ENCODE measurements at regions of chr14 and their contacts with region 1.

Region 1: GRCh38 chr14:71103662-71104484 is 196.6 kb downstream of the PCNX1 start:
- DNase-seq: peak; percentile 60

Region 2: DNA sequence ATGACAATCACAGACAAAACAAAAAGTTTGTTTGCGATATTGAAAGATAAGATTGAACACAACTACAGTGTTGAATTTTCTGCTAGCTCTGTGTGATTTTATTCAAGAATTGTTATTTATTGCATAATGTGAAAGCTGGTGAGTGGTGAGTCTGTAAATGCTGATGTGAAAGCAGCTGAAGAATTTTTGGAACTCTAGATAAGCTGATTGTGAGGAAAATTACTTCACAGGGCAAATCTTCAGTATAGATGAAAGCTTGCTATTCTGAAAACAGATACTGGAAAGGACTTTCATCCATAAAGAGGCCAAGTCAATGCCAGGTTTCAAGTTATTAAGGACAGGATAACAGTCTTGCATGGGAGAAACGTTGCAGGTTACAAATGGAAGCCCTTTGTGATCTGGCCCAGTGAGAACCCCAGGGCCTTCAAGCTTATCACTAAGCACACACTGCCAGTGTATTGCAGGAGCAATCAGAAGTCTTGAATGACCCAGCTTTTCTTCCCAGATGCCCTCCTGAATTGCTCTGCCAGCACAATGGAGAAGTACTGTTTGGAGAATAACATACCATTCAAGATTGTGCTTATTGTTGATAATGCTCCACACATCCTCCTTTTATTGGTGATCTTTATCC is 42.9 kb before region 1 on chr14:
- CTCF ChIA-PET with region 1: no interaction called
- POLR2A ChIA-PET with region 1: no interaction called
- DNase-seq: no peak

Region 3: GRCh38 chr14:71086567-71086966 is 17.3 kb before region 1 on chr14:
- CTCF ChIA-PET with region 1: interaction called, 10 read pairs
- POLR2A ChIA-PET with region 1: no interaction called
- DNase-seq: no peak